Activated CD8-positive, alpha-beta T cell treated with anti-CD3 and anti-CD28 coated beads for 36 hours (primary cell): ENCODE measurements at regions of chr2 and their contacts with region 1.

Region 1: DNA sequence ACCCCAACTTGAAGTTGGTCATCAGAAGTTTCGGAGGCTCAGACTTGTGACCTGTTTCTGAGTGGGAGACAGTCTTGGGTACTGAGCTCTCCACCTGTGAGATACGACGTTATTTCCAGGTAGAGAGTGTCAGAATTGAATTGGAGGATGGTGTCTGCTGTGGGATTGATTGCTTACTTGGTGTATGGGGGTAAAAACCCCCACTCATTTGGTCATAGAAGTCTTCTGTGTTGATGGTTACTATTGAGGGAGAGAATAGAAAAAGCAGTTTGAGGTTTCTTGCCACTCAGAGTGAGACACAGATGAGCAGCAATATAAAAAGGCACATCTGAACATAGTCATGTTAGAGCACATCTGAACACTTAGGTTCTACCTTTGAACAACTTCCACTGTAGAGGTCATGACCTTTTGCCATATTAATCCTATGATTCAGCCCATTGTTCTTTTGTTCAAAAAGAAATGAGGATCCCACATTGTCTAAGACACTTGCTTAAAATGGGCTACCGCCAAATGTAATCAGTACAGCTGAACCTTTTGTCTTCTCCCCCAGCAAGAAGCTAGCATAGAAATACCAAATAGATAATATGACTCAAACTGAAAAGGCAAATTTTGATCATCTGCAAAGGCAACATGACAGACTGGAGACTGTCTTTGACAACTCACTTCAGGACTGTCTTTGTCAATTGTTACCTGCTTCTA is 73.3 kb downstream of the NAB1 start:
- DNase-seq: peak; percentile 51
- ATAC-seq: peak; percentile 68
- H3K4me3 Mint-ChIP-seq: peak overlapping the region; percentile 63
- H3K27ac Mint-ChIP-seq: peak overlapping the region; percentile 95
- H3K4me1 Mint-ChIP-seq: peaks cover 77% of the 10 kb centered on the region
- H3K27me3 Mint-ChIP-seq: no peaks in the 10 kb centered on the region
- CTCF ChIP-seq: no peak

Region 2: GRCh38 chr2:190563109-190563508 is 159.1 kb before region 1 on chr2:
- CTCF ChIA-PET with region 1: no interaction called
- POLR2A ChIA-PET with region 1: no interaction called
- intact Hi-C with region 1: no loop called
- DNase-seq: peak; percentile 55
- ATAC-seq: peak; percentile 58
- H3K4me3 Mint-ChIP-seq: peak overlapping the region; percentile 6
- H3K27ac Mint-ChIP-seq: peak overlapping the region; percentile 73
- H3K4me1 Mint-ChIP-seq: peaks cover 19% of the 10 kb centered on the region
- H3K27me3 Mint-ChIP-seq: no peaks in the 10 kb centered on the region
- CTCF ChIP-seq: no peak

Region 3: GRCh38 chr2:190648289-190649034 is 73.7 kb before region 1 on chr2:
- CTCF ChIA-PET with region 1: no interaction called
- POLR2A ChIA-PET with region 1: interaction called, 3 read pairs
- intact Hi-C with region 1: loop called (anchors 2 kb)
- DNase-seq: peak; percentile 78
- ATAC-seq: peak; percentile 65
- H3K4me3 Mint-ChIP-seq: peak overlapping the region; percentile 68
- H3K27ac Mint-ChIP-seq: peak overlapping the region; percentile 73
- H3K4me1 Mint-ChIP-seq: peaks cover 30% of the 10 kb centered on the region
- H3K27me3 Mint-ChIP-seq: no peaks in the 10 kb centered on the region
- CTCF ChIP-seq: no peak

Region 4: GRCh38 chr2:190695739-190696138 is 26.5 kb before region 1 on chr2:
- CTCF ChIA-PET with region 1: no interaction called
- POLR2A ChIA-PET with region 1: interaction called, 4 read pairs
- intact Hi-C with region 1: loop called (anchors 2 kb)
- DNase-seq: peak; percentile 65
- ATAC-seq: peak; percentile 91
- H3K4me3 Mint-ChIP-seq: no peak overlapping the region
- H3K27ac Mint-ChIP-seq: peak overlapping the region; percentile 61
- H3K4me1 Mint-ChIP-seq: peaks cover 30% of the 10 kb centered on the region
- H3K27me3 Mint-ChIP-seq: no peaks in the 10 kb centered on the region
- CTCF ChIP-seq: no peak

Region 5: DNA sequence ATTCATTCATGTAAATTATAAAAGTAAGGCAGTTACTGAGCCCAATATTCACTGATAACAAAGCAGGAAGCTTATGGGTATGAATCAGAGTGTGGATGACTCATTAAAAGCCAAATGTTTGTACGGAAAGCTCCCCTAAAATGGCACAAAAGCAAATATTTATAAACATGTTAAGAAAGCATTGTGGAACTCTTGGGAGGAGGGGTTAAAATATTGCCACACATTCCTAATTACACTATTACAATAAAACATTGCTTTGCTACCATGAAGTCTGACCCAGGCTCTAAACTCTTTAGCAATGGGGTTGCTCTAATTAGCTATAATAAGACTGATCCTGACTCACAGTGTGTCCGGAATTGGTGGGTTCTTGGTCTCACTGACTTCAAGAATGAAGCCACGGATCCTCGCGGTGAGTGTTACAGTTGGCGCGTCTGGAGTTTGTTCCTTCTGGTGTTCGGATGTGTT is 37.6 kb after region 1 on chr2:
- CTCF ChIA-PET with region 1: no interaction called
- POLR2A ChIA-PET with region 1: no interaction called
- intact Hi-C with region 1: loop called (anchors 2 kb)
- DNase-seq: no peak
- ATAC-seq: no peak
- H3K4me3 Mint-ChIP-seq: peak overlapping the region; percentile 58
- H3K27ac Mint-ChIP-seq: peak overlapping the region; percentile 70
- H3K4me1 Mint-ChIP-seq: peaks cover 34% of the 10 kb centered on the region
- H3K27me3 Mint-ChIP-seq: no peaks in the 10 kb centered on the region
- CTCF ChIP-seq: no peak

Region 6: GRCh38 chr2:190781604-190782198 is 59.5 kb after region 1 on chr2:
- CTCF ChIA-PET with region 1: no interaction called
- POLR2A ChIA-PET with region 1: no interaction called
- intact Hi-C with region 1: no loop called
- DNase-seq: peak; percentile 70
- ATAC-seq: peak; percentile 55
- H3K4me3 Mint-ChIP-seq: no peak overlapping the region
- H3K27ac Mint-ChIP-seq: no peak overlapping the region
- H3K4me1 Mint-ChIP-seq: peaks cover 25% of the 10 kb centered on the region
- H3K27me3 Mint-ChIP-seq: peaks cover 3% of the 10 kb centered on the region
- CTCF ChIP-seq: peak; percentile 82